CD14-positive monocyte (primary cell): ENCODE measurements at regions of chr9 and their contacts with region 1.

Region 1: DNA sequence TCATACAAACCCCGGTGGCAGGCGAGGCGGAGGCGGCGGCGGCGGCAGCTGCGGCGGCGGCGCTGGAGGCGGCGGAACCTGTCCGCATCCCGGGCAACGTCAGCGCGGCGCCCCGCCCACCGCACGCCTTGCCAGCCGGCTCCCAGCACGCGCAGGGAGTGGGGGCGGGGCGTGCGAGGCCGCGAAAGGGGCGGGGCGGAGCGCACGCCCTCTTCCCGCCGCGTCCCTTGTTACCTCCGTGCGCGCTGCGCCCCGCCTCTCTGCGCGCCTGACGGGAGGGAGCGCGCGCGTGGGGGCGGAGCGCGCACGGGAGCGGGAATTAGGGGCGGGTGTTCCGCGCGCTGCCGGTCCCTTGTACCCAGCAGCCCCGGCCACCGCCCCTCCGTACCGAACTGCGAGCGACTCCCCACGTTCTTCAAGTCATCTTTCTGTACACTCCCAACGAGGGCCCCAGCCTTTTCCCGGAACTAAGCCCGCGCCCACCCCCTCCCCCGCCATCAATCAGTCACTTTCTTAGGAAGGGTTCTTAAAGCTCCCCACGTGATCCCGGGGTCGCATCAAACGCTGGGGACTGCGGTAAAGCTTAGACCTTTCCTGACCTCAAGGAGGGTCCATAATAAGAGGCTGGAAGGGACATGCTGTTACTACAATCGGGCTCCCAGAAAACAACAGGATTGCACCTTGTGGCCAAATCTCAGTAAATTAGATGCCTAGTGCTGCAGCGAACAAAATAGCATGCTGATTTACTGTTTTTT is at the start of gene AGTPBP1:
- DNase-seq: peak; percentile 93 to 94 (median 94)
- H3K4me3 ChIP-seq: peak within 1 kb of the TSS; percentile 83 to 95 (median 92)
- H3K4me3 Mint-ChIP-seq: peak within 1 kb of the TSS; percentile 86 to 96
- H3K27ac ChIP-seq: peak within 1 kb of the TSS; percentile 98 to 99
- H3K27ac Mint-ChIP-seq: peak within 1 kb of the TSS; percentile 97 to 99 (median 98)
- H3K4me1 ChIP-seq: peaks cover 56 to 72% of the 10 kb centered on the region in 2 donors
- H3K4me1 Mint-ChIP-seq: peaks cover 72% of the 10 kb centered on the region
- H3K27me3 ChIP-seq: no peaks in the 10 kb centered on the region
- H3K27me3 Mint-ChIP-seq: peaks cover 0 to 3% (median 0%) of the 10 kb centered on the region in 3 donors
- CTCF ChIP-seq: no peak
- polyA plus RNA-seq, gene AGTPBP1: 55.6 to 90.3 (median 77.0) TPM

Region 2: GRCh38 chr9:85702726-85703289 is 39.2 kb before region 1 on chr9:
- intact Hi-C with region 1: loop called (anchors 5 kb)
- DNase-seq: peak; percentile 12 to 32 (median 22)
- H3K4me3 ChIP-seq: no peak overlapping the region
- H3K4me3 Mint-ChIP-seq: no peak overlapping the region
- H3K27ac ChIP-seq: peak overlapping the region in 1 of 2 donors; percentile 60
- H3K27ac Mint-ChIP-seq: peak overlapping the region in 5 of 7 donors; percentile 34 to 81 (median 56)
- H3K4me1 ChIP-seq: peaks cover 30 to 52% of the 10 kb centered on the region in 2 donors
- H3K4me1 Mint-ChIP-seq: peaks cover 68% of the 10 kb centered on the region
- H3K27me3 ChIP-seq: no peaks in the 10 kb centered on the region
- H3K27me3 Mint-ChIP-seq: no peaks in the 10 kb centered on the region
- CTCF ChIP-seq: no peak

Region 3: DNA sequence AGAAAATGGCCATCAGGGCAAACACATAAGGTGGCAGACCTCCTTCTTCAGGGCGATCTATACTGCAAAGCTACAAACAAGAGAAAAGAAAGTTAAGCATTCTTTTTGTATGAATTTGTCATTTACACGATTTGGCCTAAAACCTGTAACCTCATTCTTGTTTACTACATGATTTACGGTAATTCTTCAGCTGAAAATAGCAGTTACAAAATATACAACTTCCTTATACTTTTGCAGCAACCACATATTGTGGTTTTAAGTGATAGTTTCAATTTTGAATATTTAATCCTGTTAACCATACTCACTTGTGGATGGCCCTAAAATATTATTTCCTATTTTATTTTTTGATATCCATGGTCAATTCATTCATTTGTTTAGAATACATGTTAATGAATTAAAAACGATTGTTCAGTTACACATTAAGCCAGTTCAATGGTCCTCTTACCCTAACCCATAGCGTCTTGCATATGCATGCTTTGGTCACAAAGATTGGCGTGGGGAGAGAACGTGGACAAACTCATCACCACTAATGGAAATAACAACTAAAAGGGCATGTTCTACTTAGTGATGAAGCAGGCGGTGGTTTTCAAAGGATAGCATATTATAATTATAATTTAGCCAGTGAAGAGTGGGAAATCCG is 595.5 kb after region 1 on chr9:
- intact Hi-C with region 1: loop called in 1 of 2 experiments (anchors 10 kb)
- DNase-seq: peak; percentile 25 to 59 (median 34)
- H3K4me3 ChIP-seq: peak overlapping the region; percentile 30 to 70 (median 51)
- H3K4me3 Mint-ChIP-seq: peak overlapping the region; percentile 61 to 82
- H3K27ac ChIP-seq: peak overlapping the region; percentile 54 to 69
- H3K27ac Mint-ChIP-seq: peak overlapping the region; percentile 80 to 92 (median 87)
- H3K4me1 ChIP-seq: peaks cover 34 to 53% of the 10 kb centered on the region in 2 donors
- H3K4me1 Mint-ChIP-seq: peaks cover 50% of the 10 kb centered on the region
- H3K27me3 ChIP-seq: no peaks in the 10 kb centered on the region
- H3K27me3 Mint-ChIP-seq: no peaks in the 10 kb centered on the region
- CTCF ChIP-seq: no peak